IMR-90 (cell line): ENCODE measurements at regions of chr17 and their contacts with region 1.

Region 1: GRCh38 chr17:47895856-47896671 is at the start of gene SP2:
- DNase-seq: peak; percentile 100
- ATAC-seq: peak; percentile 92
- H3K4me3 ChIP-seq: peak within 1 kb of the TSS; percentile 97
- H3K27ac ChIP-seq: peak within 1 kb of the TSS; percentile 94
- H3K4me1 ChIP-seq: peaks cover 1% of the 10 kb centered on the region; the same call in 1 of the 2 replicates
- H3K27me3 ChIP-seq: no peaks in the 10 kb centered on the region
- CTCF ChIP-seq: no peak
- POLR2A ChIP-seq: peak; percentile 82
- RAD21 ChIP-seq: no peak
- total RNA-seq, gene SP2: 0.72 and 1.4 TPM in 2 replicates

Region 2: GRCh38 chr17:47941236-47941994 is 45.4 kb after region 1 on chr17 and contains the start of gene PNPO:
- CTCF ChIA-PET with region 1: no interaction called
- POLR2A ChIA-PET with region 1: interaction called, 12 read pairs
- dilution Hi-C with region 1: no loop called
- in situ Hi-C with region 1: no loop called
- intact Hi-C with region 1: loop called (anchors 1 kb)
- DNase-seq: peak; percentile 97
- ATAC-seq: peak; percentile 100
- H3K4me3 ChIP-seq: peak within 1 kb of the TSS; percentile 70
- H3K27ac ChIP-seq: peak within 1 kb of the TSS; percentile 39; the same call in 1 of the 2 replicates
- H3K4me1 ChIP-seq: peaks cover 2% of the 10 kb centered on the region; the same call in 1 of the 2 replicates
- H3K27me3 ChIP-seq: no peaks in the 10 kb centered on the region
- CTCF ChIP-seq: no peak
- POLR2A ChIP-seq: no peak
- RAD21 ChIP-seq: no peak
- total RNA-seq, gene PNPO: 32.5 and 34.1 TPM in 2 replicates

Region 3: GRCh38 chr17:47970704-47971463 is 74.8 kb after region 1 on chr17 and contains the start of gene CDK5RAP3:
- CTCF ChIA-PET with region 1: no interaction called
- POLR2A ChIA-PET with region 1: no interaction called
- dilution Hi-C with region 1: no loop called
- in situ Hi-C with region 1: no loop called
- intact Hi-C with region 1: loop called (anchors 1 kb)
- DNase-seq: peak; percentile 99
- ATAC-seq: peak; percentile 98
- H3K4me3 ChIP-seq: peak within 1 kb of the TSS; percentile 82
- H3K27ac ChIP-seq: peak within 1 kb of the TSS; percentile 73
- H3K4me1 ChIP-seq: peaks cover 17% of the 10 kb centered on the region
- H3K27me3 ChIP-seq: no peaks in the 10 kb centered on the region
- CTCF ChIP-seq: peak; percentile 99
- POLR2A ChIP-seq: peak; percentile 87; the same call in 1 of the 2 replicates
- RAD21 ChIP-seq: peak; percentile 74
- total RNA-seq, gene CDK5RAP3: 56.7 and 75.3 TPM in 2 replicates

Region 4: GRCh38 chr17:49013311-49014213 is 1117.5 kb after region 1 on chr17:
- CTCF ChIA-PET with region 1: no interaction called
- POLR2A ChIA-PET with region 1: no interaction called
- dilution Hi-C with region 1: no loop called
- in situ Hi-C with region 1: no loop called
- intact Hi-C with region 1: no loop called
- DNase-seq: no peak
- ATAC-seq: peak; percentile 58
- H3K4me3 ChIP-seq: no peak overlapping the region
- H3K27ac ChIP-seq: peak overlapping the region; percentile 51
- H3K4me1 ChIP-seq: peaks cover 27% of the 10 kb centered on the region
- H3K27me3 ChIP-seq: no peaks in the 10 kb centered on the region
- CTCF ChIP-seq: no peak
- POLR2A ChIP-seq: no peak
- RAD21 ChIP-seq: no peak